ENCODE measurements at regions of chr16 and their contacts with region 1.

Region 1: DNA sequence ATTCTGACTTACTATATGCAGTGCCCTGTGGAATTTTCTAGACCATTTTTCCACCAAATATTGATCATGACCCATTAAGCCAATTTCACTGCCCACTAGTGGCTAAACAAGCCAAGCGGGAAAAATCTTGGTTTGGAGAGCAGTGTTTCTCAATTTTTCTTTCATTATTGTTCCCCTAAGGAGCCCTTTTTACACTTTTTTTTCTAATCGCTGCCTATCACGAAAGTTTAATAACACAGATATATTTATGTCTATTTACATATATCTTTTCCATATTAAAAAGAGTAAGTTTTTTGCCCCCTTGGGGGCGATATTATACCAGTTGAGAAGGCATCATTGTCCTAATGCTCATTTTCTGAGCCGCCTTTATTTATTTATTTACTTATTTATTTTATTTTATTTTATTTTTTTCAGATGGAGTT is 10.8 kb upstream of the TLCD3B start:
- DNase-seq: no peak
- ATAC-seq: no peak
- H3K4me3 ChIP-seq: no peak overlapping the region
- H3K27ac ChIP-seq: no peak overlapping the region
- H3K4me1 ChIP-seq: no peaks in the 10 kb centered on the region
- H3K27me3 ChIP-seq: no peaks in the 10 kb centered on the region
- CTCF ChIP-seq: no peak

Region 2: DNA sequence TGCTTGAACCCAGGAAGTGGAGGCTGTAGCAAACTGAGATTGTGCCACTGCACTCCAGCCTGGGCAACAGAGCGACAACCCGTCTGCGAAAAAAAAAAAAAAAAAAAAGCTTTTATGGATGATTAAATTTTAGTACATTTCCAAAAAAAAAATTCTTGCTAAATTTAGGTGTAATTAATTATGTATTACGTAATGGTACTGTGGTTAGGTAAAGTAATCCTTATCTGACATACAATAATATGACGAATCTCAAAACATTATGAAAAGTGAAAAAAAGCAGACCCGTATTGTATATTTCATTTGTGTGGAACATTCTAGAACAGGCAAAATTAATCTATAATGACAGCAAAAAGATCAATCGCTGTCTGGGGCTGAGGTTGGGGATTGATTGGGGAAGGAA is 131.2 kb after region 1 on chr16:
- CTCF ChIA-PET with region 1: interaction called, 10 read pairs
- POLR2A ChIA-PET with region 1: no interaction called
- in situ Hi-C with region 1: no loop called
- intact Hi-C with region 1: no loop called
- DNase-seq: no peak
- ATAC-seq: no peak
- H3K4me3 ChIP-seq: no peak overlapping the region
- H3K27ac ChIP-seq: no peak overlapping the region
- H3K4me1 ChIP-seq: no peaks in the 10 kb centered on the region
- H3K27me3 ChIP-seq: no peaks in the 10 kb centered on the region
- CTCF ChIP-seq: no peak